ENCODE measurements at regions of chr10 and their contacts with region 1.

Region 1: DNA sequence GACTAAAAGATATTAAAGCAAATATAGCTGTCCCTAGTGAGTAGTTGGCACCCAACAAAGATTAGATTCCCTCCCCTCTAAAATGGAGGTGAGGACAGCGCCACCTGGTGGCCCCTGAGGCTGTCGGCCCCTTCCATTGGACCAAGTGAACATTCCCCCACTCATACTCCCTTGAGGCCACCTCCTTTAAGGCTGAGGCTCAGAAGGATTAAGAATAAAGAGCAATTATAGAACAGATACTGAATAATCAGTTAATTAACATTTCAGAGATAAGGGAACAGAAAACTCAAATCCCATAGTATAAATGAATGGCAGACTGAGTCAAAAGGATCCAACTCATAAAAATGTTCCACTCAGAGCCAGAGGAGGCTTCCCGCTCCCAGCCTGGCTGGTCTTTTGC is 130.4 kb upstream of the GHITM start:
- DNase-seq: no peak
- ATAC-seq: no peak
- H3K4me3 ChIP-seq: no peak overlapping the region
- H3K27ac ChIP-seq: no peak overlapping the region
- H3K4me1 ChIP-seq: no peaks in the 10 kb centered on the region
- H3K27me3 ChIP-seq: no peaks in the 10 kb centered on the region
- CTCF ChIP-seq: peak; percentile 90

Region 2: DNA sequence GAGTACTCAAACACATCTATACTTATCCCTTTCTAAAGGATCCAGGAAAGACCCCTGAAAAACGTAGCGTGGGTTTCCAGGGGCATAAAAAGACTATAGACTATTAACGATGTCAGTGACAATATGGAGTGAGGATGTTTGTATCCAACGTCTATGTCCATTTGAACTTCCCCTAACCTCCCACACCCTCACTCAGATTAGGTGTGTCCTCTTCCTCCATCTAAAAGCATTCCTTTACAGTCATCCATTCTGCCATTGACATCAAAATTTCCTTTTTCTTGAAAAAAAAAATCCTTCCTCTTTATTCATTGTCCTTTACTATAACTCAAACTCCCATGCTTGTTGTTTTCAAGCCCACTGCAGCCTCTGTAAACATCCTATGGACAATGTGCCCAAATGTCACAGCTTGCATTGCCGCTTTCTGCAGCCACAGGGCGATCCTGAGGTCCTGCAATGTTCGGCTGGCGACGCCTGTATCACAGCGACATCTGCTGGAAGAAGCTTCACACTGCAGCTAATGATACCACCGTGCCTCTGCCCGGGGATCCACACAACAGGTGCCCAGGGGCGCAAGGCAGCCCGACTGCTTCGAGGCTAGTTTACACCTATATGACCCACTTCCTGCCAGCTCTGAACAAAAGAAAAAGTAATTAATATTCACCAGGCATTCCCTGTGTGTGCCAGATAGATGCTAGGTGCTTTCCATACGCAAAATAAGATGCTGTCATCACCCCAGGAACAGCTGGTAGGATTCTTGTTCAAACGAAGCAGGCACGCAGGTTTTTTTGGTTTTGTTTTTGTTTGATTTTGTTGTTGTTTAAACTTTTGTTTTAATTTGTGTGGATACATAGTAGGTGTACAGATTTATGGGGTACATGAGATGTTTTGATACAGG is 137.4 kb before region 1 on chr10:
- CTCF ChIA-PET with region 1: interaction called, 13 read pairs
- POLR2A ChIA-PET with region 1: interaction called, 5 read pairs
- in situ Hi-C with region 1: no loop called
- intact Hi-C with region 1: no loop called
- DNase-seq: peak; percentile 64
- ATAC-seq: peak; percentile 98
- H3K4me3 ChIP-seq: no peak overlapping the region
- H3K27ac ChIP-seq: no peak overlapping the region
- H3K4me1 ChIP-seq: no peaks in the 10 kb centered on the region
- H3K27me3 ChIP-seq: no peaks in the 10 kb centered on the region
- CTCF ChIP-seq: peak; percentile 97

Region 3: DNA sequence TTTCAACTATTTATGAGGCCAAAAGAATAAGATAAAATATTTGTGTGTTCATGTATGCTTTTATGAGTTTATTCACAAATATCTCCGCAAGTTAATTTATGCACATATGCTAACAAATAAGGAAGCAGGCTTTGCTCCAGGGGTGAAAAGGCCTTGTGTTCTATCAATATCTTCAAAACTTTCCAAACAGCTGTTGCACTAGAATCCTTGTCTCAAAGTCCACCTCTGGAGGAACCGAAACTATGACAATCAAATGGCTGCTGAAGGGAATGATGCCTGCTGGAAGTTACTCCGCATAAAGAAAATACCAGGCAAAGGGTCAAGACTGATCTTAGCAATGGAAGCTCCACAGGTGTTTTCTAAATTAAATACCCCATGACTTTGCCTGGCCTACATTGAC is 14.6 kb before region 1 on chr10:
- CTCF ChIA-PET with region 1: no interaction called
- POLR2A ChIA-PET with region 1: interaction called, 18 read pairs
- in situ Hi-C with region 1: no loop called
- intact Hi-C with region 1: no loop called
- DNase-seq: no peak
- ATAC-seq: no peak
- H3K4me3 ChIP-seq: no peak overlapping the region
- H3K27ac ChIP-seq: no peak overlapping the region
- H3K4me1 ChIP-seq: no peaks in the 10 kb centered on the region
- H3K27me3 ChIP-seq: peaks cover 6% of the 10 kb centered on the region; the same call in 1 of the 2 replicates
- CTCF ChIP-seq: no peak

Measured in Panc1 (cell line).